ENCODE measurements at regions of chr10 and their contacts with region 1.

Region 1: DNA sequence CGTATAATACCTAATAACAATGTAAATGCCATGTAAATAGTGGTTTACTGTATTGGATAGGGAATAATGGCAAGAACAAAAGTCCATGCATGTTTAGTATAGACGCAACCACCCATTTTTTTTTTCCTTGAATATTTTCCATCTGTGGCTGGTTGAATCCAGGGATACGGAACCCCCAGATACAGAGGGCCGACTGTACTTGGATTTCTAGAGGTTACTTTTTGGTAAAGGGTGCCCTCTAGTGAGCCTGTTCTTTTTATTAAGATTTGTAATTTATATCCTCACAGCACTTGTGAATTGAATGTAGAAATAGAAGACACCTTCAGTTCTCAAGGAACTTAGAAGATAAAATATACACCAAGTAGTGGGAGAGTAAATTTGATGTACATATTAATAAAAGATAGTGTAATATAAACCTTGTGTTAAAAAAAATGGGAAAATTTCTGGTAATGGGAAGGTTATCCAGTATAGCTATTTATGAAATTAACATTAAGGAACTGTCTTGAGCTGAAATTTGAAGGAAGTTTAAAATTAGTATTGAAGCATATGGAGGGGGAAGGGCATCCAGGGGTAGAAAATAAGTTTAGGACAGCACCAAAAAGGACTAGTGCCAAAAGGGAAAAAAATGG is 32.0 kb downstream of the EXOC6 start:
- DNase-seq: peak in 6 of 9 donors; percentile 7 to 40 (median 32)
- ATAC-seq: peak; percentile 62
- H3K4me3 ChIP-seq: no peak overlapping the region
- H3K4me3 Mint-ChIP-seq: no peak overlapping the region
- H3K27ac ChIP-seq: no peak overlapping the region
- H3K27ac Mint-ChIP-seq: peak overlapping the region in 2 of 9 donors; percentile 0 to 20
- H3K4me1 ChIP-seq: peaks cover 0 to 11% of the 10 kb centered on the region in 2 donors
- H3K4me1 Mint-ChIP-seq: peaks cover 18 to 42% (median 31%) of the 10 kb centered on the region in 7 donors
- H3K27me3 ChIP-seq: no peaks in the 10 kb centered on the region
- H3K27me3 Mint-ChIP-seq: no peaks in the 10 kb centered on the region

Region 2: DNA sequence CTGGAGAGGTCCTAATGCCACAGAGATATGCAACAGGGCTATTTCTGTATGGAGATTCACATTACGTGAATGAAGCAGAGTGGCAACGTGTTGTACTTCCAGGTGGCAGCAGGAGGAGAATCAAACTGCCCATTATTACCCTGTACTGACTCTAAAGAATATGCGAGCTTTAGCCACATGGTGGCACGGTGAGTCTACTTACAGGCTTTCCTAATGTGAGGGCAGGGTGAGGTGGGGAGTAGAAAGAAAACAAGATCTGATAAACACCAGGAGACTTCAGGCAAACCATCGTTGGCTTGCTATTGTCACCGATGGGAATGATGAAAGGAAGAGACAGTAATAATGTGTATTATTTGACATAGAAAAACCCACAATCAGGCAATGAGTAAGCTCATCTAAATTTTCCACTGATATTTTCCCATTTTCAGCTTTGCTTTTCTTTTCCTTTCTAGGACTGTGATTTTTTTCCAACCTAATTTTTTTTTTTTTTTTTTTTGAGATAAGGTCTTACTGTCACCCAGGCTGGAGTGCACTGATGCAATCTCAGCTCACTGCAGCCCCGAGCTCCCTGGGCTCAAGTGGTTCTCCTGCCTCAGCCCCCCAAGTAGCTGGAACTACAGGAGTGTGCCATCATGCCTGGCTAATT is 792.5 kb before region 1 on chr10:
- CTCF ChIA-PET with region 1: no interaction called
- POLR2A ChIA-PET with region 1: no interaction called
- intact Hi-C with region 1: loop called in 1 of 2 experiments (anchors 5 kb)
- DNase-seq: peak in 8 of 9 donors; percentile 26 to 58 (median 39)
- ATAC-seq: peak; percentile 95
- H3K4me3 ChIP-seq: no peak overlapping the region
- H3K4me3 Mint-ChIP-seq: no peak overlapping the region
- H3K27ac ChIP-seq: no peak overlapping the region
- H3K27ac Mint-ChIP-seq: peak overlapping the region in 1 of 9 donors; percentile 62
- H3K4me1 ChIP-seq: no peaks in the 10 kb centered on the region
- H3K4me1 Mint-ChIP-seq: peaks cover 0 to 5% (median 2%) of the 10 kb centered on the region in 7 donors
- H3K27me3 ChIP-seq: no peaks in the 10 kb centered on the region
- H3K27me3 Mint-ChIP-seq: peaks cover 0 to 1% (median 0%) of the 10 kb centered on the region in 5 donors

Region 3: DNA sequence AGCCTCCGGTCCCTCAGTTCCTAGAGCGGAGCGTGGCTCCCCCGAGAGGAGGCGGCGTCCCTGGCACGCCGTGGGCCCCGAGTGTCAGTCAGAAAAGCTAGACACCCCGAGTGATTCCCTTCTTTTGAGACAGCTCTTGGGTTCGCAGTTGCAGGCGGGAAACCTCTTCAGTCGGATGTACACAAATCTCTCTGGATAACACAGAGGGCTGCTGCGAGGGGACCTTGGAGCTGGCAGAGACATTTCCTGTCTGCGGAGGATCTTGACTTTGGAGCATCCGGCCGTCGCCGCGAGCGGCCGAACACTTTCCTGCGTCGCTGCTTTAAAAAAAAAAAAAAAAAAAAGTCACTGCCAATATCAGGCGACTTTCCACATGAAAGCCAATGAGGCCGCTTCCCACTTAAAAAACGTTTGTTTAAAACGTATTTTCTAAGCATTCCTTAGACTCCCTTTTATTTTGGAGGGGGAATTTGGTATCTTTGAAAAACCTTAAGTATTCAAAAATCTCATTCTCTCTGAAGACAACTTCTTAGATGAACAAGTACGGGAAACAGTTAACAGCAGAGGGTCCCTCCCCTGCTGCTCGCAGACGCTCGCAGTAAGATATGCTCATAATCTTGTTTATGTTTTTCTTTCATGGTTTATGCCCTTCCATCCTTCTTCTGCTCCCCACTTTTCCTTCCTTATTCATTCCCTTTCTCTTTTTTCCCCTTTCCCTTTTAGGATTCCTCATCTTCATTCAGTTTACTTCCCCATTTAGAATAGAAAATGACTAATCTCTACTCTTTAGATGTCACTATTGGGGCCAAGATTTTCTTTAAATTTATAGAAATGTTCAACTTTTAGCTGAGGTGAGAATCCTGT is 180.6 kb before region 1 on chr10:
- CTCF ChIA-PET with region 1: no interaction called
- POLR2A ChIA-PET with region 1: no interaction called
- intact Hi-C with region 1: no loop called
- DNase-seq: peak in 4 of 9 donors; percentile 12 to 32 (median 20)
- ATAC-seq: peak; percentile 57
- H3K4me3 ChIP-seq: peak overlapping the region; percentile 46
- H3K4me3 Mint-ChIP-seq: peak overlapping the region; percentile 74 to 89 (median 85)
- H3K27ac ChIP-seq: no peak overlapping the region
- H3K27ac Mint-ChIP-seq: peak overlapping the region in 1 of 9 donors; percentile 74
- H3K4me1 ChIP-seq: peaks cover 11 to 18% of the 10 kb centered on the region in 2 donors
- H3K4me1 Mint-ChIP-seq: peaks cover 15 to 36% (median 25%) of the 10 kb centered on the region in 7 donors
- H3K27me3 ChIP-seq: peaks cover 6 to 10% of the 10 kb centered on the region in 2 donors
- H3K27me3 Mint-ChIP-seq: peaks cover 56 to 86% (median 77%) of the 10 kb centered on the region in 5 donors

Region 4: DNA sequence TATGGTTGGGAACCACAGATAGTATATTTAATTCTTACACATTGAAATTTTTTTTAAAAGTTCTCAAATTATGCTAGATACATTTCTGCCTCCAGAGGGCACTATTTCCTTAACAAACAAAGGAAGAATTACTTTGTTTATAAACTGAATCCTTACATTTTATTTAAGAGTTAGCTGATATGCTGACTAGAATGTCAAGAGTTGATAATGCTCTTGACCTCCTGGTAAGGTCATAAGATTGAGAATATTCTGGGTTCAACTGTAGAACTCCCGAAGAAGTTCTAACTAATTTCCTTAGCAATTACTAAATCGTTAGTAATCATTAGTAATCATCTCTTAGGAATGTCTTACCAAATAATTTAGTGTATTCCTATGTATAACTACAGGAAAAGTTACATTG is 85.0 kb after region 1 on chr10:
- CTCF ChIA-PET with region 1: no interaction called
- POLR2A ChIA-PET with region 1: no interaction called
- intact Hi-C with region 1: loop called in 1 of 2 experiments (anchors 1 kb)
- DNase-seq: peak in 5 of 9 donors; percentile 8 to 26 (median 14)
- ATAC-seq: no peak
- H3K4me3 ChIP-seq: no peak overlapping the region
- H3K4me3 Mint-ChIP-seq: no peak overlapping the region
- H3K27ac ChIP-seq: no peak overlapping the region
- H3K27ac Mint-ChIP-seq: no peak overlapping the region
- H3K4me1 ChIP-seq: no peaks in the 10 kb centered on the region
- H3K4me1 Mint-ChIP-seq: peaks cover 0 to 2% (median 0%) of the 10 kb centered on the region in 7 donors
- H3K27me3 ChIP-seq: no peaks in the 10 kb centered on the region
- H3K27me3 Mint-ChIP-seq: no peaks in the 10 kb centered on the region

Region 5: GRCh38 chr10:93115661-93116383 is 235.5 kb after region 1 on chr10:
- CTCF ChIA-PET with region 1: no interaction called
- POLR2A ChIA-PET with region 1: no interaction called
- intact Hi-C with region 1: loop called in 1 of 2 experiments (anchors 10 kb)
- DNase-seq: peak; percentile 51 to 77 (median 69)
- ATAC-seq: peak; percentile 82
- H3K4me3 ChIP-seq: no peak overlapping the region
- H3K4me3 Mint-ChIP-seq: peak overlapping the region in 5 of 10 donors; percentile 21 to 57 (median 41)
- H3K27ac ChIP-seq: no peak overlapping the region
- H3K27ac Mint-ChIP-seq: peak overlapping the region in 8 of 9 donors; percentile 12 to 80 (median 44)
- H3K4me1 ChIP-seq: peaks cover 4 to 15% of the 10 kb centered on the region in 2 donors
- H3K4me1 Mint-ChIP-seq: peaks cover 0 to 50% (median 17%) of the 10 kb centered on the region in 7 donors
- H3K27me3 ChIP-seq: no peaks in the 10 kb centered on the region
- H3K27me3 Mint-ChIP-seq: peaks cover 0 to 27% (median 9%) of the 10 kb centered on the region in 5 donors

Region 6: DNA sequence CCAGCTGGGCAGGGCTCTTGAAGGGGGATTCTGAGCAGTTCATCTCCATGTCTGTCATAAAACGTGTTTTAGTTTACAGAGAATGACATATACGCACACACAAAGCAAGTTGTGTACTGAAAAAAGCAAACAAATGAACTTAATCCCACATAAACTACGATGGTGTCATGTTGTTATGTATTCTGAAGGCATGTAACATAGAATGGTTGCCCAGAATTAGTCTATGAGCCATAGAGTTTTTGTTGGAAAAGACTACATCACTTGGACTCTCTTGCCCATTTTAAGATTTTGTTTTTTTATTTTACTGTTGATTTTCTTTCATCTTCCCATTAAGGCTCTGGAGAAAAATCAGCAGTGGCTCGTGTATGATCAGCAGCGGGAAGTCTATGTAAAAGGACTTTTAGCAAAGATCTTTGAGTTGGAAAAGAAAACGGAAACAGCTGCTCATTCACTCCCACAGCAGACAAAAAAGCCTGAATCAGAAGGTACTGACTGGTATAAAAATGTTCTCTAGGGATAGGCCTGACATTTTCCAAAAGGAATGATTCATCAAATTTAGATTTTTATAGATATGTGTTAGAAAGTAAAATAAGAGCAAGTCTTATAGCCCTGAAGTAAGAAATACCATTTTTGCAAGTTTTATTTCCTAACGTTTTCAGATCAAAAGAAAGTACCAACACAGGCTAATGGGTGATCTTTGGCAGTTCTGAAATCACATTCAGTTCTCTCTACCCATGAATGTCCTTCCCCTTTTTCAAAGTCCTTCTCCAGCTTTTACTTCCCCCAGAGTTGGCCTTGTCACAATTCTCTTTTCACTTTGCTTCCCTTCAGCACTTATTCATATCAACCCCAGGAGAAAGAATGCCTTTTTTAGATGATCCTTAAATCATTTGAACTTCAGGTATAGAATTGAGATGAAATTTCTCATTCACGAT is 635.0 kb after region 1 on chr10:
- CTCF ChIA-PET with region 1: no interaction called
- POLR2A ChIA-PET with region 1: no interaction called
- intact Hi-C with region 1: loop called in 1 of 2 experiments (anchors 10 kb)
- DNase-seq: no peak
- ATAC-seq: peak; percentile 67
- H3K4me3 ChIP-seq: no peak overlapping the region
- H3K4me3 Mint-ChIP-seq: no peak overlapping the region
- H3K27ac ChIP-seq: no peak overlapping the region
- H3K27ac Mint-ChIP-seq: no peak overlapping the region
- H3K4me1 ChIP-seq: no peaks in the 10 kb centered on the region
- H3K4me1 Mint-ChIP-seq: peaks cover 0 to 5% (median 0%) of the 10 kb centered on the region in 7 donors
- H3K27me3 ChIP-seq: no peaks in the 10 kb centered on the region
- H3K27me3 Mint-ChIP-seq: no peaks in the 10 kb centered on the region

Measured in naive thymus-derived CD4-positive, alpha-beta T cell (primary cell).